ENCODE measurements at regions of chr5 and their contacts with region 1.

Region 1: DNA sequence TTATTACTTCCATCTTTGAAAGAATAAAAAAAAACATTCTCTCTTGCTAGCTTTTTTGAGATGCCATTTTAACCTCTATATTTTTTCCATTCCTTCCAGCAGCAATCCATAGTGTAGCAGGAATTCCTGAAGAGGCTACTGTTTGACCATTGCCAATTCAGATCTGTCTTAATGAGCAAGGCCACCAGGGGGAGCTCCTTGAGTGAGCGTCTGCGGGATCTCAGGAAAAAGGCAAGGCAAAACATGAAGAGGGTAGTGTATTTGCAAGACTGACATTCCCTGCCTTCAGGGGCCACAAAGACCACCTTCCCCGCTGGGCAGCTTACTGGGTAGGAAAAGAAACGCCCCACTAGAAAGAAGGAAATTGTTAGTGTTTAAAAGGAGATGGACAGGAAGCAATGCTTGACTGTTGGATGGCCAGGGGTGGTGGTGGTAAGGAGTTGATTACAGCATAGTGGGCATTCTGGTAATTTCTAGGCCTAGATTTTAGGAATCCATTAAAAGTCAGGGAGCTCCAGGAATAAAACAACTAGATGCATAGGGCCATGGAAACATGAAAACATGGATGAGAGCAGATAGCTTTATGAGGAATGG is 206.6 kb upstream of the HAPLN1 start:
- DNase-seq: peak; percentile 87
- H3K4me3 Mint-ChIP-seq: no peak overlapping the region
- H3K27ac Mint-ChIP-seq: no peak overlapping the region
- H3K4me1 Mint-ChIP-seq: peaks cover 40% of the 10 kb centered on the region
- H3K27me3 Mint-ChIP-seq: no peaks in the 10 kb centered on the region
- CTCF ChIP-seq: peak; percentile 93

Region 2: GRCh38 chr5:84045964-84046363 is 118.7 kb after region 1 on chr5:
- CTCF ChIA-PET with region 1: no interaction called
- intact Hi-C with region 1: no loop called
- DNase-seq: no peak
- H3K4me3 Mint-ChIP-seq: no peak overlapping the region
- H3K27ac Mint-ChIP-seq: no peak overlapping the region
- H3K4me1 Mint-ChIP-seq: no peaks in the 10 kb centered on the region
- H3K27me3 Mint-ChIP-seq: no peaks in the 10 kb centered on the region
- CTCF ChIP-seq: no peak

Region 3: DNA sequence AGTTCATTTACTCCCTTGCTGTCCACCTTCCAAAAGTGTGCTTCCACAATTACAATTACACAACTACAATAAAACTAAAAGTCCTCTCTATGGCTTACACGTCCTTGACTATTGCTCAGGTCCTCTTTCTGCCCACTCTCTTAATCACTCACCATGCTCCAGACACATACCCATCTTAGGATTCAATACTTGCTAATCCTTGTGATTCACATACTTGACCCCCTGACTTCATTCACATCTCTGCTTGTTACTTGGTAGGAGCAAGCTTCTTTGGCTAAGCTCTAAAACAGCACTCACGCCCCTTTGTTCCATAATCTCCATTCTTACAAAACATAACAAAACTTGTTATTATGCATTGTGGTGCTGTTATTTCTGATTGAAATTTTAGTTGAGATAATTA is 241.6 kb after region 1 on chr5:
- CTCF ChIA-PET with region 1: no interaction called
- intact Hi-C with region 1: no loop called
- DNase-seq: no peak
- H3K4me3 Mint-ChIP-seq: no peak overlapping the region
- H3K27ac Mint-ChIP-seq: no peak overlapping the region
- H3K4me1 Mint-ChIP-seq: no peaks in the 10 kb centered on the region
- H3K27me3 Mint-ChIP-seq: no peaks in the 10 kb centered on the region
- CTCF ChIP-seq: no peak

Region 4: GRCh38 chr5:84249918-84250630 is 322.8 kb after region 1 on chr5:
- CTCF ChIA-PET with region 1: no interaction called
- intact Hi-C with region 1: loop called (anchors 5 kb)
- DNase-seq: no peak
- H3K4me3 Mint-ChIP-seq: no peak overlapping the region
- H3K27ac Mint-ChIP-seq: no peak overlapping the region
- H3K4me1 Mint-ChIP-seq: peaks cover 11% of the 10 kb centered on the region
- H3K27me3 Mint-ChIP-seq: no peaks in the 10 kb centered on the region
- CTCF ChIP-seq: no peak

Region 5: DNA sequence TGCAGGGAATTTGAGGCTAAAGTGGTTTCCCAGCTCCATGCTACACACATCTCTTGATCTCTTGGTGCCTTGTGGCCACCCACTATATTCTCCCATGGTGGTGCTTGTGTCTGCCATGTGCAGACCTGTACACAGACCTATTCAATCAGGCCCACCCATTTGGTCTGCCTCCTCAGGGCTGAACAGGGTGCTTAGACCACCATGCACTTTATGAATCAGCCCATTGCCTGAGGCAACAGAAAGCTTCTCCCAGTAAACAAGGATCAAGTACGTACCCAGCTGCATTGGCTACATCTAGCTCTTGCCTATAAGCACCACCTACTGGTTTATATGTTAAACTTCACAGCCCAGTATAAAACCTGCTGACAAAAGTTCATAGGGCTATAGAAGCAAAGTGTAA is 1121.8 kb after region 1 on chr5:
- CTCF ChIA-PET with region 1: no interaction called
- intact Hi-C with region 1: loop called (anchors 10 kb)
- DNase-seq: peak; percentile 6
- H3K4me3 Mint-ChIP-seq: no peak overlapping the region
- H3K27ac Mint-ChIP-seq: no peak overlapping the region
- H3K4me1 Mint-ChIP-seq: no peaks in the 10 kb centered on the region
- H3K27me3 Mint-ChIP-seq: no peaks in the 10 kb centered on the region
- CTCF ChIP-seq: peak; percentile 39